ENCODE measurements at regions of chr15 and their contacts with region 1.

Region 1: GRCh38 chr15:48861813-48862431 is 16.0 kb upstream of the EID1 start:
- DNase-seq: peak; percentile 10 to 68
- ATAC-seq: peak; percentile 73 to 84; a peak in 4 of 6 replicates
- H3K4me3 ChIP-seq: no peak overlapping the region
- H3K27ac ChIP-seq: no peak overlapping the region
- H3K4me1 ChIP-seq: peaks cover 15% of the 10 kb centered on the region; the same call in 2 of the 3 replicates
- CTCF ChIP-seq: peak; percentile 78
- EP300 ChIP-seq: no peak
- POLR2A ChIP-seq: no peak
- RAD21 ChIP-seq: peak; percentile 91 to 92

Region 2: DNA sequence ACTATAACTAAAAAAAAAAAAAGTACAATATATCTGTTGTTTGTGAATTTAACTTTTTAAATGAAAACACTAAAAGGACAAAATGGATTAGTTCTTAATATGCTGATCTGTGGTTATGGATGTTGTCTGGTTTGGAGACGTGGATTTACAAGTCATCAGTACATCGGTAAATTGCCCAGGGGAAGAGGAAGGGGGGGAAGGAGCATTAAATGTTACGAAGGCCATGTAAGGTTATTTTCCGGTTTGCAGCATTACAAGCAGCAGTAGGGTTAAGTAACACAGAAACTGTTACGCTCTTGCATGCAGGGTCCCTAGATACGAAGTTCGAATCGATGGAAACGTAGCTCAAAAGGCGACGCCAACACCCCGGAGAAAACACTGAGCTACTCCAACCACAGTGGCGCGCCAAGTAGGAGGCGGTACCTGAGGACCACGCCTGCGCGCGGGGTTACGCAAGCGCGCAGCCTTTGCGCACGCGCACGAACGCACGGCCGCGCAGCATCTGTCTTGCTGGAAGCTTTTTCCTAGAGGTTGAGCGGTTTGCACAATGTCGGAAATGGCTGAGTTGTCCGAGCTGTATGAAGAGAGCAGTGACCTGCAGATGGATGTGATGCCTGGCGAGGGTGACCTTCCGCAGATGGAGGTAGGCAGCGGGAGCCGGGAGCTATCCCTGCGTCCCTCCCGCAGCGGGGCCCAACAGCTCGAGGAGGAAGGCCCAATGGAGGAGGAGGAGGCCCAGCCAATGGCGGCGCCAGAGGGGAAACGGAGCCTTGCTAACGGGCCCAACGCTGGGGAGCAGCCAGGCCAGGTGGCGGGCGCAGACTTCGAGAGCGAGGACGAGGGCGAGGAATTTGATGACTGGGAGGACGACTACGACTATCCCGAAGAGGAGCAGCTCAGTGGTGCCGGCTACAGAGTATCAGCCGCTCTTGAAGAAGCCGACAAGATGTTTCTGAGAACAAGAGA is 16.0 kb after region 1 on chr15 and contains the start of gene EID1:
- CTCF ChIA-PET with region 1: interaction called, 18 read pairs
- POLR2A ChIA-PET with region 1: interaction called, 4 read pairs
- DNase-seq: peak; percentile 54 to 93
- ATAC-seq: peak; percentile 98
- H3K4me3 ChIP-seq: peak within 1 kb of the TSS; percentile 96
- H3K27ac ChIP-seq: peak within 1 kb of the TSS; percentile 91
- H3K4me1 ChIP-seq: peaks cover 15% of the 10 kb centered on the region; the same call in 1 of the 3 replicates
- CTCF ChIP-seq: no peak
- EP300 ChIP-seq: no peak
- POLR2A ChIP-seq: peak; percentile 71
- RAD21 ChIP-seq: no peak
- polyA plus RNA-seq, gene EID1: 80.2 and 125 TPM in 2 replicates

Region 3: GRCh38 chr15:48963524-48964113 is 101.7 kb after region 1 on chr15 and contains the start of gene SHC4:
- CTCF ChIA-PET with region 1: interaction called, 144 read pairs
- POLR2A ChIA-PET with region 1: interaction called, 3 read pairs
- DNase-seq: peak; percentile 37 to 63
- ATAC-seq: peak; percentile 88 to 89
- H3K4me3 ChIP-seq: peak within 1 kb of the TSS; percentile 52
- H3K27ac ChIP-seq: peak within 1 kb of the TSS; percentile 49 to 75; a peak in 5 of 6 replicates
- H3K4me1 ChIP-seq: no peaks in the 10 kb centered on the region
- CTCF ChIP-seq: peak; percentile 29
- EP300 ChIP-seq: no peak
- POLR2A ChIP-seq: no peak
- RAD21 ChIP-seq: peak in 1 of 2 experiments; percentile 9; a peak in 1 of 5 replicates
- polyA plus RNA-seq, gene SHC4: 0.16 and 0.17 TPM in 2 replicates

Region 4: DNA sequence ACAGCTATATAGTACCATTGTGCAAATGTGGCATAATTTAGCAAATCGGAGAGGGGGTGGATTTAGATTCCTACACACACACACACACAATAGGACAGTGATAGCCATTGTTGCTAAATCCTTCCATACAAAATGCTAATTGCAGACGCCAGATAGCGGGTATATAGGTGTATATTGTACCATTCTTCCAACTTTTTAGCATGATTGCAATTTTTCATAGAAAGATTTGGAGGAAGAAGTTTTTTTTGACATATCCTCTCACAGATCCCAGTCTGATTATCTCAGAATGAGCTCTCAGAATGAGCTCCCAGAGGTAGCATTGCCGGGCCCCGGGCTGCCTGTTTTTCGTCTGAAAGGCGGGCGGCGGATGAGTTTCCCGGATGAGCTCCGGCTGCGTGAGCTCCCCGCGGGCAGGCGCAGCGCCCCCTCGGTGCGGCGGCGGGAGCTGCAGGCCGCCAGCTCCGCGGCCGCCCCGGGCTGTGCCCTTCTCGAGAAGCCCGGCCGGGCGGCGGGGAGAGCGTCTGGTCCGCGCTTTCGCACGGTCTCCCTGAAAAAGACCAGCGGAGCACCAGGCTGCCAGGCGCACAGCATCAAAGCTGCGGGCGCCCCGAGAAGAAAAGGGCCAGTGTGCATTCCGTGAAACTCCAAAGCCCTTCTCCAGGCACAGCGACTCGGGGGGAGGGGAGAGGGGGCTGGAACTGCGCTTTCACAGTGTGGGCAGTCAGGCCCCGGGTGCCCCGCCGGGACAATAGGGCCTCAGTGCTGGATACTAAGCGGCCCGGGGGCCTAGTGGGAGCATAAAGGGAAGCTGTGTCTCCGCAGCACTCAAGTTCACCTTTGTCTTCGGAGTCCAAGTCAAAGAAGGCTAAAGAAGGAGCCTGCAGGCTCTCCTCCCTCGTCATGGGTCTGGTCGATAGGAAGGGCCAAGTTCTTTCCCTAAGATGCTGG is 113.8 kb after region 1 on chr15:
- CTCF ChIA-PET with region 1: interaction called, 52 read pairs
- POLR2A ChIA-PET with region 1: no interaction called
- DNase-seq: peak; percentile 46 to 74
- ATAC-seq: peak; percentile 97 to 99
- H3K4me3 ChIP-seq: peak overlapping the region; percentile 60
- H3K27ac ChIP-seq: peak overlapping the region; percentile 88 to 96
- H3K4me1 ChIP-seq: 0 out of 3 replicates have a peak, but pooled peaks cover 5% of the 10 kb centered on the region
- CTCF ChIP-seq: peak; percentile 67
- EP300 ChIP-seq: no peak
- POLR2A ChIP-seq: peak; percentile 27; the same call in 1 of the 2 replicates
- RAD21 ChIP-seq: peak; percentile 34 to 49; a peak in 3 of 5 replicates

Region 5: GRCh38 chr15:49145651-49146609 is 284.0 kb after region 1 on chr15:
- CTCF ChIA-PET with region 1: interaction called, 19 read pairs
- POLR2A ChIA-PET with region 1: no interaction called
- DNase-seq: peak; percentile 18 to 53
- ATAC-seq: peak; percentile 59 to 67; a peak in 4 of 6 replicates
- H3K4me3 ChIP-seq: no peak overlapping the region
- H3K27ac ChIP-seq: no peak overlapping the region
- H3K4me1 ChIP-seq: peaks cover 5% of the 10 kb centered on the region; the same call in 1 of the 3 replicates
- CTCF ChIP-seq: peak; percentile 69
- EP300 ChIP-seq: no peak
- POLR2A ChIP-seq: no peak
- RAD21 ChIP-seq: peak; percentile 36 to 40; a peak in 3 of 5 replicates

Measured in A549 (cell line).